Aorta (tissue), 5 donors: ENCODE measurements at regions of chr1 and their contacts with region 1.

Region 1: GRCh38 chr1:114346480-114347029 is 164.4 kb downstream of the TRIM33 start:
- DNase-seq: peak; percentile 97 to 100
- ATAC-seq: peak; percentile 99
- H3K4me3 ChIP-seq: peak overlapping the region; percentile 16 to 20
- H3K27ac ChIP-seq: peak overlapping the region in 1 of 2 donors; percentile 76
- H3K4me1 ChIP-seq: no peaks in the 10 kb centered on the region
- H3K27me3 ChIP-seq: no peaks in the 10 kb centered on the region

Region 2: DNA sequence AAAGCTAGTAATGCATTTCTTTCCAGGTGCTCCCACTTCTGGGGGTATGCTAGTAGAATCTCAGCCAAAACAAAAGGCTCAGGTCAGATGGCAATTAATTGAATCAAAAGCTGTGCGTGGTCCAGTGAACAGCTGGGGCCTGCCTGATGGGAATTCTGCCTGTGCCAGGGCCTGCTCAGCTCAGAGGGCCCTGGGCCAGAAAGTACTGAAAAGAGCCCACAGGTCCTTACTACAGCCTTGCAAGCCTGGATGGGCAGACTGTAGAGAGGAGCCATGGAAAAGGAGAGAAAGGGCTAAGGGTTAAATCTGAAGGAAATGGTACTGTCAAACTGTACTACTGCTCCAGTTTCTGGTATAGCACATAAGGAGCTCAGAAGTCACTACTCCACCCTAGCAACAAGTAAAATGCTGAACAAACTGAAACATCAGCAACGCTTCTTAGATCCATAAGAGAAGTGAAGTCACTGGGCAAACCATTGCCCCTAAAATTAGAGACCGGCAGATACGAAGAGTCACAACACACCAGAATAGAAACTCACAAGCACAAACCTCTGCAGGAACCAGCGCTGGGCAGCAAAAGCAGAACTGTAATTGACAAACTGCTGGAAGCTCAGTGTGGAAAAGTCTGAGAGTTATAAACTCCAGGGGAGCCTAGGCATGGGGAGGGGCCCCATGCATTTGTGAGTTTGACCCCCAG is 71.8 kb before region 1 on chr1:
- intact Hi-C with region 1: no loop called
- DNase-seq: no peak
- ATAC-seq: no peak
- H3K4me3 ChIP-seq: no peak overlapping the region
- H3K27ac ChIP-seq: no peak overlapping the region
- H3K4me1 ChIP-seq: no peaks in the 10 kb centered on the region
- H3K27me3 ChIP-seq: no peaks in the 10 kb centered on the region

Region 3: DNA sequence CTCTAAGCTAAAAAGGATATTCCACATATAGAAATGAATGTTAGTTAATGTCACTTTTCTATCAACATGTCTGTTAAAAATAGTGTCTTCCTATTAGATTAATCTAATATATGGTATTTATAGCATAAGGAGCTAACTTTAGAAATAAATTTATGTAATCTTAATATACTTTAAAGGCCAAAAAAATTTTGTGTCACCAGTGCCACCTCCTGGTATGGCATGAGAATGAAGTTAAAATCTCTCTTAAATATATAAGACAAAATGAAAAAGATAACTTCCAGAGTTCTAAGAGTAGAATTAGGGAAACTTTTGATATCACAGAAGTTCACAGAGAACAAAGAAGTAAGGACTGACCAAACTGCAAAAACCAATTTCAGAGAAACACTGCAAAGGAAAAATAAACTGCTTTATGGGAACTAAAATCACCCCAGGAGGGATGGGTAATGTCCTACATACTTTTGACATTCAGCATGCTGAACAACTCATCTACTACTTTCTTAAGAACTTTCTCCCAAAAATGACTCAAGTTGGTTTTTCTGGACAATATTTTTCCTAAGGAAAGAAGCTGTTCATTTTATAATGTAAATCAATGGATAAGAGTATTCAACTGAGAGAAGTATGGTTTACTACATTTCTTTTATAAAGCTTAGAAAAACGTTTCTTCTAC is 81.7 kb after region 1 on chr1:
- intact Hi-C with region 1: loop called (anchors 2 to 5 kb)
- DNase-seq: no peak
- ATAC-seq: no peak
- H3K4me3 ChIP-seq: no peak overlapping the region
- H3K27ac ChIP-seq: no peak overlapping the region
- H3K4me1 ChIP-seq: no peaks in the 10 kb centered on the region
- H3K27me3 ChIP-seq: no peaks in the 10 kb centered on the region

Region 4: GRCh38 chr1:114511032-114511785 is 164.7 kb after region 1 on chr1 and contains the start of gene TRIM33:
- intact Hi-C with region 1: loop called in 1 of 2 experiments (anchors 2 kb)
- DNase-seq: peak; percentile 94 to 97
- ATAC-seq: peak; percentile 97
- H3K4me3 ChIP-seq: peak within 1 kb of the TSS; percentile 55 to 83
- H3K27ac ChIP-seq: peak within 1 kb of the TSS; percentile 78 to 89
- H3K4me1 ChIP-seq: no peaks in the 10 kb centered on the region
- H3K27me3 ChIP-seq: no peaks in the 10 kb centered on the region
- total RNA-seq, gene TRIM33: 39.3 to 42.8 TPM

Region 5: DNA sequence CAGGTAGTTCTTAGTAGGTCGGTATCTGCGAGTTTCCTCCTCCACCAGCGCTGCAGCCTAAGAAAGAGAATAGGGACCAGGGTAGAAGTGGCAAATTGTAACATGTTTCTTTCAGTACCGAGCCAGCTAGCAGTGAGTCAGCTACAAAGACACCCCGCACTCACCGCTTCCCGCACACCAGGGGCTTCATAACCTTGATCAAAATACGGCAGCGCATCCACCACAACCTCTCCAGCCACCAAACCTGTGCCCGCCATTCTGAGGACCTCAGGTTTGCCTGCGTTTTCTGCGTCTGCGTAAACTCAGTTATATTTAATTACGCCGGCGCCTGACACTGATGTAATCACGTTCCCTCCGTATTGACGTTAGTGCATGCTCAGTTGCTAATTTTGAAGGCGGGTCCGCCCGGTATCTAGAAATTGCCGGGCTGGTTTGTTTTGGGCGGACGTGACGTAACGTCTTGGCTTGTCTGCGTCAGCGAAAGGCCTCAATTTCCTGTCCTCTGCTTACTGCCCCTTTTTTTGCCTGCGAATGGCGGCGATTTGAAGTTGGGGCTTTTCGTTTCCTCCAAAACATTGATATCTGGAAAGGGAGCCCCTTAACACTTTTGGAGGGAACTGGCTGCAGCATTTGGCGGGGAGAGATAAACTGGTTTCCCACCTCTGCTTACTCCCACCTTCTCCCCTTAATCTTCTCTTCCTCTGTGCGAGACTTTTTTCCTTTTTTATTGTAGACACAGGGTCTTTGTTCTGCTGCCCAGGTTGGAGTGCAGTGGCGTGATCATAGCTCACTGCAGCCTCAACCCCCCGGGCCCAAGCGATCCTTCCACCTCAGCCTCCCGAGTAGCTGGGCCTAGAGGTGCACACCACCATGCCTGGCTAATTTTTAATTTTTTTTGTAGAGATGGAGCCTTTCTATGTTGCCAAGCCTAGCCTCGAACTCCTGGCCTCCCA is 235.1 kb after region 1 on chr1 and contains the start of gene BCAS2:
- intact Hi-C with region 1: loop called (anchors 10 kb)
- DNase-seq: peak; percentile 97 to 98
- ATAC-seq: peak; percentile 98
- H3K4me3 ChIP-seq: peak within 1 kb of the TSS; percentile 32 to 89
- H3K27ac ChIP-seq: peak within 1 kb of the TSS; percentile 15 to 71
- H3K4me1 ChIP-seq: peaks cover 0 to 4% of the 10 kb centered on the region in 2 donors
- H3K27me3 ChIP-seq: no peaks in the 10 kb centered on the region
- total RNA-seq, gene BCAS2: 23.9 to 29.8 TPM

Region 6: DNA sequence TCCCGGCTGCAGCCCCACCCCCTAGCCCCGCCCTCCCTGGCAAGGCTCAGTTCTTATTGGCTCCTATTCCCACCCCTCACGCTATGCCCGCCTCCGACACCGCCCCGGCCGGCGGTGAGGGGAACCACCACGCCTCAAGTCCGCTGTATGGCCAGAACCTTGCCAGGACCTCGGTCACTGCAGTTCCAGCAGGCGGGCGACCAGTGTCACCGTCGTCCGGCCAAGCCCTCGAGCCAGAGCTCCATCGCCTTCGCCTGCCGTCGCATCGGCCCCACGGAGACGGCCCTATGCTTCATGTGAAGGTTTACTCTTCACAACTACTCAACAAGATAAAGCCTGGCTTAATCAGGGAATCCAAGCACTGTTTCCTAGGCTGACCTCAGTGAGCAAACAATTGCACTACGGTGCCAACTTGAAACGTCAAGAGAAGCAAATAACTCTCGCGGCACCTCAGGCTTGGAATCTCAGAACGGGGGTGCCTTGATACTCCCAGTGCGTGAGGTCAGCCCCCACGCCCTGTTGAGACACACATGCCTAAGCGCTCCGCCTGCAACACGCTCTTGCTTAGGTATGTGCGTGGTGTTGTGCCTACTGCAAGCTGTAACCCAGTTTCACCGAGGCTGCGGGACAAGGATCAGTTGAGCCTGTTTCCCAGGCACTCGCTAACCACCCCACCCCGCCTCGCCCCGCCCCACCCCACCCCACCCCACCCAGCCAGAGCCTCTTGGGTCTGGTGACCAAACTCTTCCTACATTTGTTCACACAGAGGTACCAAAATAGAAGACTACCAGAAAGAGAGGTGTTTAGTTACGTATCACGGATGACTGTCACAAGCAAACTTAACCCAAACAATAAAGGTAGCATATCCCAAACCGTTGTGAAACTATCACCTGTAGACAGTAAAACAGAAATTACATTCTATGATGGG is 323.8 kb after region 1 on chr1:
- intact Hi-C with region 1: loop called in 1 of 2 experiments (anchors 10 kb)
- DNase-seq: peak; percentile 96 to 98
- ATAC-seq: peak; percentile 100
- H3K4me3 ChIP-seq: peak overlapping the region; percentile 65 to 97
- H3K27ac ChIP-seq: peak overlapping the region in 1 of 2 donors; percentile 24
- H3K4me1 ChIP-seq: no peaks in the 10 kb centered on the region
- H3K27me3 ChIP-seq: no peaks in the 10 kb centered on the region